Dorsolateral prefrontal cortex (tissue), 120 donors: ENCODE measurements at regions of chr18 and their contacts with region 1.

Region 1: GRCh38 chr18:34921226-34921625 is 120.0 kb upstream of the MAPRE2 start:
- DNase-seq: no peak
- H3K4me3 ChIP-seq: no peak overlapping the region
- H3K27ac ChIP-seq: no peak overlapping the region
- H3K27me3 ChIP-seq: no peaks in the 10 kb centered on the region
- CTCF ChIP-seq: no peak

Region 2: DNA sequence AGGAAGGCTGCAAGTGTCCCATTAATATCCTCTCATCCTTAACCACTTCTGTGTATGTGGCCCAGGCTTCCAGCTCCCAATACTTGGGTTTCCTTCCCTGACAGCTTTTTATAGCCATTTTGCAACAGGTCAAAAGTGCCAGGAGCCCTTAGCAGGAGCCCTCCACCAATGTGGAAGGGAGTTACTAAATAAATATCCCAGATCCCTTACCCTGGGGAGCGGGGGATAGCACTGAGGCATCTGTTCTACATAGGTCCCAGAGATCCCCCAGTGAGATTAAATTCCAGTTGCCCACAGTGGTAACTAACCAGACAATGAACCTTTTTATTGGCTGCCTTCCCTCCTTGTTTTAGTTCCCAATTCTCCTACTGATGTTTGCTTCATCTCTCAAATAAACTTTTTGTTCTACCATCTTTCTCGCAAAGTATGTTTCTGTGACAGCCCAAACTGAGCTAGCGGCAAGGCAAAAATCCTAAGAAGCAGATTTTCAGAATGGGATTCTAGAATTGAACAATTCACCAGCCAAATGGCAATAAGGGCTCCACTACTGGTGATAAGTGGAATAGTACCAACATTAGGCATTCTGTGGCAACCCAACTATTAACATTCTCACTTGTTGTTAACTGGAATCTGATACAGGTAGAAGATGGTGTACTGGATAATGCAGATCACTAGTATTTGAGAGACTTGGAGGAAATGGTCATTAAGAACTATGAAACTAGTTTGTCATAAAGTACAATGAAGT is 36.1 kb after region 1 on chr18:
- intact Hi-C with region 1: loop called in 1 of 2 experiments (anchors 5 kb)
- DNase-seq: no peak
- H3K4me3 ChIP-seq: no peak overlapping the region
- H3K27ac ChIP-seq: peak overlapping the region in 1 of 59 donors; percentile 8
- H3K27me3 ChIP-seq: no peaks in the 10 kb centered on the region
- CTCF ChIP-seq: no peak

Region 3: DNA sequence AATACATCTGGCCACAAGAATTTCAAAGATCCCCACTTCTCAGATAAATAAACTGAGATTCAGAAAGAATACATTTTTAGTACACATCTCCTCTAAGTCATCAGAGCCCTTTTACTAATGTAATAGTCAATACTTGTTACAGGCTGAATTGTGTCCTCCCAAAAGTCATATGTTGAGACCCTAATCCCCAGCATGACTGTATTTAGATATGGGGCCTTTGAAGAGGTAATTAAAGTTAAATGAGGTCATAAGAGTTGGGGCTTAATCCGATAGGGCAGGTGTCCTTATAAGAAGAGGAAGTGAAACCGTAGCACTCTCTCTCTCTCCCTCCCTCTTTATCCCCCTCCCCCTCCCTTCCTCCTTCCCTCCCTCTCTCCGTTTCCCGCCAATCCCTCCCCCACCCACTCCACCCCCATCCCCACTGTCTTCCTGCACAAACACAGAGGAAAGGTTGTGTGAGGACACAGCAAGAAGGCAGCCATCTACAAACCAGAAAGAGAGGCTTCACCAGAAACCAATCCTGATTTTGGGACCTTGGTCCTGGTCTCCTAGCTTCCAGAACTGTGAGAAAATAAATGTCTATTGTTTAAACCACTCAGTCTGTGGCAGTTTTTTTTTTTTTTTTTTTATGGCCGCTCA is 253.0 kb after region 1 on chr18:
- intact Hi-C with region 1: no loop called
- DNase-seq: no peak
- H3K4me3 ChIP-seq: peak overlapping the region in 1 of 59 donors; percentile 0
- H3K27ac ChIP-seq: peak overlapping the region in 7 of 59 donors; percentile 5 to 57 (median 21)
- H3K27me3 ChIP-seq: no peaks in the 10 kb centered on the region
- CTCF ChIP-seq: no peak